A673 (cell line): ENCODE measurements at regions of chr1 and their contacts with region 1.

Region 1: DNA sequence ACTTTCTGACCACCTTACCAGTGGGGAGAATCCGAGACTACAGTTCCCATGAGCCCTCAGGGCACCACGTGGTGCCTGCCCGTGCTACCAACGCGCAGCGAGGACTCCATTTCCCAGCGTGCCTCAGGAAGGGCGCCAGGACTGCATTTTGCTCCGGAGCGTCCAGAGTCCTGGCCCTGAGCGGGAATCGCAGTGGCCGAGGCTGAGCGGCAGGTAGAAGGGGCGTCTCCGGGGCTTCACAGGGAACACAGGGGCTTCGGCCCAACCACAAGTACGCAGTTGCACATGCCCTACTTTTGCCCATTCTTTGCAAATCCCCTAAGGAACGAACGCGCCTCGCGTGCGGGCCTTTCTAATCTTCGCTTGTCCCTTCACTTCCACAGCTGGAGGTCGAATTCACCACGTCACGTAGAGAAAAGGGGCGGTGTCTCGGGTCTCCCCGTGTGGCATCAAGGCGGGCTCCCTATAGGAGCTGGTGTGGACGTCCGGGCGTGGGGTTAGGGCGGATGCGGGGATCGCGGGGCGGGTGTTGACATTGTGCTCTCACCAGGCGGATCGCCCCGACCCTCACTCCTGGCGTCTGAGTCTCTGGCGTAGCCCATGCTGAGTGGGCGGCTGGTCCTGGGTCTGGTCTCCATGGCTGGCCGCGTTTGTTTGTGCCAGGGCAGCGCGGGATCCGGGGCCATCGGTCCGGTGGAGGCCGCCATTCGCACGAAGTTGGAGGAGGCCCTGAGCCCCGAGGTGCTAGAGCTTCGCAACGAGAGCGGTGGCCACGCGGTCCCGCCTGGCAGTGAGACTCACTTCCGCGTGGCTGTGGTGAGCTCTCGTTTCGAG is at the start of gene BOLA1:
- DNase-seq: peak; percentile 97
- H3K4me3 ChIP-seq: peak within 1 kb of the TSS; percentile 51
- H3K27ac ChIP-seq: peak within 1 kb of the TSS; percentile 75
- H3K4me1 ChIP-seq: peaks cover 5% of the 10 kb centered on the region
- H3K27me3 ChIP-seq: no peaks in the 10 kb centered on the region
- CTCF ChIP-seq: no peak
- total RNA-seq, gene BOLA1: 15.7 and 18.8 TPM in 2 replicates

Region 2: GRCh38 chr1:150053926-150054325 is 154.2 kb after region 1 on chr1:
- CTCF ChIA-PET with region 1: no interaction called
- POLR2A ChIA-PET with region 1: no interaction called
- intact Hi-C with region 1: loop called (anchors 5 kb)
- DNase-seq: no peak
- H3K4me3 ChIP-seq: no peak overlapping the region
- H3K27ac ChIP-seq: no peak overlapping the region
- H3K4me1 ChIP-seq: no peaks in the 10 kb centered on the region
- H3K27me3 ChIP-seq: no peaks in the 10 kb centered on the region
- CTCF ChIP-seq: no peak